Posterior vena cava (tissue), 2 donors: ENCODE measurements at regions of chr18 and their contacts with region 1.

Region 1: GRCh38 chr18:64765908-64766307 is 617.0 kb upstream of the LINC00305 start:
- DNase-seq: no peak

Region 2: DNA sequence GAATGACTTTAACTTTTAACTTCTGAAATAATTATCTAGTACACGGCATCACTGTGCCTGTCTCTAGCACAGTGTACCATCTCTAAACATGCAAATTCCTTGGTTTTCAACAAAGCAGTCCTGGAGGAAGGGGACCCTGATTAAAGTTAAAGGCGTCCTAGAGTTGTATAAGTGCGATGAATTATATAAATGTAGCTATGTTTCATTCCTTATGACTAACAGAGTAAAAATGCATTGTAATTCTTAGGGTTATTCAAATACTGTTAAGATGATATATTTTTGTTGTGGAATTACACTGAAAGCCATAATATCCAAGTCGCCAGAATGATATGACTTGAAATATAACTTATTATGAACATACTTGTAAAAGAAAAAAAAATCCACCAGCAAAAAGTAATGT is 72.1 kb before region 1 on chr18:
- intact Hi-C with region 1: loop called in 1 of 2 experiments (anchors 2 kb)
- DNase-seq: no peak